Breast epithelium (tissue), 4 donors: ENCODE measurements at regions of chr2 and their contacts with region 1.

Region 1: DNA sequence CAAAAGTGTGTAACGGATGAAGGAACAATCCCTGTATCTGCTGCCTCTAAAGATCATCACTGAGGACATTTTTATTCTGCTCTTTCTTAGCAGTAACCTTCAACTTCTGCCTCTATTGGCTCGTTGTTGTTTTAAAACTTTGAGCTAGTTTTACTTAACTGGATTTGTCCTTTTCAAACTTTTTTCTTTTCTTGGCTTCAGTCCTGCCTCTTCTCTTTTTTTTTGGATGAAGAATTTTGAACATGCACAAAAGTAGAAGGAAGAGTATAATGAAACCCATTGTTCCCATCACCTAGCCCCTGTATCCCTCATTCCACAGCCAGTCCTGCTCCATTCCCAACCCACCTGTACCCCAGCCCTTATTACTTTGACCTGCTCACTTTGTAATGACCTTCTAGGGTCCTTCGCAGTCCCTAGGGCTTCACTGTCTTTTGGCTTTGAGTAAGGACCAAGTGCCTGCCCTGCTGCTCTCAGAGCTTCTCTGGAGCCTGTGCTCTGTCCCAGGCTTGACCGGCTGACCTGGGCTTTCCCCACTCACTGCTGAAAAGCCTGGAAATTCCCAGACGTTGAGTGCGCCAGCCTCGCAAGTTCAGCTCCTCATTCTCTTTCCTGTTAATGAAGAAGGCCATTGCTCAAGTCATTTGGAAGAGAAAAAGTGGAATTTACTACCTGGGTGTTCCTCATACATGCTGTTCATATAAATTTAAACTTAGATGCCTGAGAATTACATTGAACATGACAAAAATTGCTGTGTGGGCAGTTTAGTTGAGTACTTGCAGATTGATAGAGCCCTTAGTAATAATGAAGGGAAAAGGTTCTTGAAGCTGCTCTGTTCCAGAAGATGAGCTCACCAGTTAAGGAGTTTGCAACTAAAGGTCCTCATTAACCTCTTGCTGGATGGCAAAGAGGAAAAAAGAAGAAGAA is 149.3 kb upstream of the ALPP start:
- DNase-seq: no peak
- H3K4me3 ChIP-seq: no peak overlapping the region
- H3K27ac ChIP-seq: peak overlapping the region; percentile 22 to 64
- H3K4me1 ChIP-seq: peaks cover 0 to 3% of the 10 kb centered on the region in 2 donors
- H3K27me3 ChIP-seq: no peaks in the 10 kb centered on the region
- CTCF ChIP-seq: no peak
- POLR2A ChIP-seq: no peak

Region 2: GRCh38 chr2:231970461-231970860 is 258.8 kb before region 1 on chr2:
- intact Hi-C with region 1: loop called (anchors 10 kb)
- DNase-seq: no peak
- H3K4me3 ChIP-seq: no peak overlapping the region
- H3K27ac ChIP-seq: no peak overlapping the region
- H3K4me1 ChIP-seq: no peaks in the 10 kb centered on the region
- H3K27me3 ChIP-seq: no peaks in the 10 kb centered on the region
- CTCF ChIP-seq: no peak
- POLR2A ChIP-seq: no peak